ENCODE measurements at regions of chr9 and their contacts with region 1.

Region 1: GRCh38 chr9:124960409-124960752 is 19.5 kb upstream of the GOLGA1 start:
- DNase-seq: no peak
- ATAC-seq: no peak
- H3K4me3 Mint-ChIP-seq: no peak overlapping the region
- H3K27ac Mint-ChIP-seq: peak overlapping the region in 2 of 10 donors; percentile 26 to 32
- H3K4me1 Mint-ChIP-seq: peaks cover 11 to 20% (median 18%) of the 10 kb centered on the region in 4 donors
- H3K27me3 Mint-ChIP-seq: no peaks in the 10 kb centered on the region

Region 2: DNA sequence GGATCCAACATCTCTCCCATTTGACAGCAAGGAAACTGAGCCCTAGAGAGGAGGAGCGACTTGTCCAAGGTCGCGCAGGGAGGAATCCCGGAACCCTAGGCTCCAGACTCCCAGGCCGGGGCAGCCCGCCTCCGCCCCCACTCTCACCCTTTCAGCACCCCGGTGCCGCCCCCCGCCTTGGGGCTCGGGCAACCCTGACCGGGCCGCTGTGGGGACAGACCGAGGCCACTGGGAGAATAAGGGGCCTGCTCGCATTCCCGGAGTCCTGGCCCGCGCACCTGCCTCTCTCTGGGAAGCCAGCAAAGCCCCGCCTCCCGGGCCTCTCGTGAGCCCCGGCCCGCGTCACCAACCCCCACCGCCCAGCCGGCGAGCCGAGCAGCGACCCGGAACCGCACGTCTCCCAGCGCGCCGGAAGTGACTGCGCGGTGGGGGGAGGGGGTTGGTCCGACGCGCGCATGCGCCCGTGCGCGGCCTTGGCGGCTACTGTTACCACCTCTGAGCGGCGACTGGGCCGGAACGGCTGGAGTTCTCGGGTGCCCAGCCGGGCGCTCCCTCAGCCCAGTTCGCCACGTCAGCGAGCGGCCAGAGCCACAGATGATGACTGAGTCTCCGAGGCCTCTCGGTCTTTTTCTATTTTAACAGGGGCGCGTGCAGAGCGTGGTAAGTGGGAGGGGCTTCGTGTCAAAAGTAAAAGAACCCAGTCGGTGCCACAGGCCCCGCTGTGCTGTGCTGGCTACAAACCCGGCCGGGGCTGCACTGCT is 19.5 kb before region 1 on chr9 and contains the start of gene GOLGA1:
- POLR2A ChIA-PET with region 1: interaction called, 74 read pairs
- DNase-seq: peak; percentile 89 to 97 (median 94)
- ATAC-seq: peak; percentile 83 to 86
- H3K4me3 Mint-ChIP-seq: peak within 1 kb of the TSS; percentile 91 to 98 (median 96)
- H3K27ac Mint-ChIP-seq: peak within 1 kb of the TSS; percentile 94 to 99 (median 98)
- H3K4me1 Mint-ChIP-seq: peaks cover 13 to 37% (median 31%) of the 10 kb centered on the region in 4 donors
- H3K27me3 Mint-ChIP-seq: no peaks in the 10 kb centered on the region
- polyA plus RNA-seq, gene GOLGA1: 2.4 to 6.8 (median 6.8) TPM

Region 3: GRCh38 chr9:125126019-125126746 is 165.8 kb after region 1 on chr9:
- POLR2A ChIA-PET with region 1: interaction called, 11 read pairs
- DNase-seq: peak; percentile 53 to 94 (median 82)
- ATAC-seq: peak; percentile 99 to 100
- H3K4me3 Mint-ChIP-seq: peak overlapping the region; percentile 63 to 88 (median 76)
- H3K27ac Mint-ChIP-seq: peak overlapping the region; percentile 77 to 98 (median 84)
- H3K4me1 Mint-ChIP-seq: peaks cover 12 to 43% (median 30%) of the 10 kb centered on the region in 4 donors
- H3K27me3 Mint-ChIP-seq: peaks cover 0 to 2% (median 0%) of the 10 kb centered on the region in 5 donors

Region 4: DNA sequence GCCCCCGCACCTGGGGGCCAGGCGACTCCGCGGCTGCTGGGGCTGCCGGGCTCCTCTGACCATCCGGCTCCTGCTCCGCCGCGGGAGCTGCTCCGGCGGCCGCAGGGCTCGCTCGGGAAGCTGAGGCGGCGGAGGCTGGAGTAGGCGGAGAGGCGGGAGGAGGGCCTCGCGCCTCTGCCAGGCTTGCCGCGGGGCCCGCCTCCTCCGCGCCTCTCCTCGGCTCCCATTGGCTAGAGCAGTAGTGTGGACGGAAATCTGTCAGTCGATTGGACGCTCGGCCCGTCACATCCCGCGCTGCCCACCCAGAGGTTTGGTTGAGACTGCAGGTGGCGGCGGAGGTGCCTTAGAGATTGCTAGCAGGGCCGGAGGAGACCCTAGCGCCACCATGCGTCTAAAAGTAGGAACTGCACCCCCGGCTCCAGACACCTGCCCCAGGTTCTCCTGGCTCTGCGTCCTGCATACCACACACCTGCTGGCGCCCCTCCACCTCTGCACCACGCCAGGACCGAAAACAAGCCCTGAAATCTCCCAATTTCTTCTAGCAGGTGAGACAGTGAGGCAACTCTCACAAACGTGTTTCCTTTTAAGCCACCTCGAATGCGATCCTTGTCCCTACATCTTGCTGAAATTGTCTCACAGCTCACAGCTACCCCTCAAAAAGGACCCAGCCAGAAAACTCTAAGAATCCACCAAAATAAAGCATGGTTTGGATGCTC is 183.2 kb after region 1 on chr9 and contains the start of gene SCAI:
- POLR2A ChIA-PET with region 1: interaction called, 10 read pairs
- DNase-seq: peak; percentile 93 to 99 (median 98)
- ATAC-seq: peak; percentile 98 to 99
- H3K4me3 Mint-ChIP-seq: peak within 1 kb of the TSS; percentile 85 to 100 (median 96)
- H3K27ac Mint-ChIP-seq: peak within 1 kb of the TSS; percentile 61 to 93 (median 90)
- H3K4me1 Mint-ChIP-seq: peaks cover 16 to 39% (median 32%) of the 10 kb centered on the region in 4 donors
- H3K27me3 Mint-ChIP-seq: no peaks in the 10 kb centered on the region
- polyA plus RNA-seq, gene SCAI: 1.1 to 3.9 (median 3.7) TPM